ENCODE measurements at regions of chr6 and their contacts with region 1.

Region 1: GRCh38 chr6:132684272-132684671 is 25.3 kb upstream of the TAAR1 start:
- DNase-seq: no peak

Region 2: GRCh38 chr6:132695773-132696172 is 11.5 kb after region 1 on chr6:
- intact Hi-C with region 1: loop called in 1 of 2 experiments (anchors 1 kb)
- DNase-seq: no peak